A549 (cell line): ENCODE measurements at regions of chr16 and their contacts with region 1.

Region 1: DNA sequence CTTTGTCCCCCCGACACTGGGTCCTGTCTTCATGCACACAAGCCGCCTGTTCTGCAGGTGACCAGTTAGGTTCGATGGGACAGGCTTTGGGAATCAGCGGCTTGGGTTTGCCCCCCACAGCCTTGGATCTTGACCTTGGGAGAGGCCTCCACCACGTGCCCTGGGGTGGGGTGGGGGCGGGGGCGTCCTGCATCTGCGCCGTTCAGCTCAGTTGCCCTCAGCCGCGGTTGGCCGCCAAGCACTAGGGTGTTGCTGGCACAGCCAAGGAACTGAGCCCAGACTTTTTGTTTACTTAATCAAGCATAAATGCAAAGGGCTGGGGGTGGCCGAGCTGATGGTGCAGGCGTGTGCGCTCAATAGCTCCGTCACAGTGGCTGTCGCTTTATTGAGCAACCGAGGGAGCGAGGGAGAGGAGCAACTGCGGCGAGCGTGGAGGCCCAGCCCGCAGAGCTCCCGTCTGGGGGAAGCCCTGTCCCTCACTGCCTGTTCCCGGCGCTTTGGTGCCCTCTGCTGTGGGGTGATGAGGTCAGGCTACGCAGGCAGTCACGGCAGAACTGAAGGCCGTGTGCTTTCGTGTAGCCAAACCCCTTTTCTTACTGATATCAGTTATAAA is 33.9 kb downstream of the JPH3 start:
- DNase-seq: peak; percentile 87 to 98
- ATAC-seq: peak; percentile 90 to 95
- H3K4me3 ChIP-seq: peak overlapping the region; percentile 53
- H3K27ac ChIP-seq: peak overlapping the region; percentile 75 to 85
- H3K4me1 ChIP-seq: 0 out of 3 replicates have a peak, but pooled peaks cover 7% of the 10 kb centered on the region
- CTCF ChIP-seq: peak; percentile 84
- EP300 ChIP-seq: no peak
- POLR2A ChIP-seq: peak; percentile 32
- RAD21 ChIP-seq: peak; percentile 91 to 95

Region 2: DNA sequence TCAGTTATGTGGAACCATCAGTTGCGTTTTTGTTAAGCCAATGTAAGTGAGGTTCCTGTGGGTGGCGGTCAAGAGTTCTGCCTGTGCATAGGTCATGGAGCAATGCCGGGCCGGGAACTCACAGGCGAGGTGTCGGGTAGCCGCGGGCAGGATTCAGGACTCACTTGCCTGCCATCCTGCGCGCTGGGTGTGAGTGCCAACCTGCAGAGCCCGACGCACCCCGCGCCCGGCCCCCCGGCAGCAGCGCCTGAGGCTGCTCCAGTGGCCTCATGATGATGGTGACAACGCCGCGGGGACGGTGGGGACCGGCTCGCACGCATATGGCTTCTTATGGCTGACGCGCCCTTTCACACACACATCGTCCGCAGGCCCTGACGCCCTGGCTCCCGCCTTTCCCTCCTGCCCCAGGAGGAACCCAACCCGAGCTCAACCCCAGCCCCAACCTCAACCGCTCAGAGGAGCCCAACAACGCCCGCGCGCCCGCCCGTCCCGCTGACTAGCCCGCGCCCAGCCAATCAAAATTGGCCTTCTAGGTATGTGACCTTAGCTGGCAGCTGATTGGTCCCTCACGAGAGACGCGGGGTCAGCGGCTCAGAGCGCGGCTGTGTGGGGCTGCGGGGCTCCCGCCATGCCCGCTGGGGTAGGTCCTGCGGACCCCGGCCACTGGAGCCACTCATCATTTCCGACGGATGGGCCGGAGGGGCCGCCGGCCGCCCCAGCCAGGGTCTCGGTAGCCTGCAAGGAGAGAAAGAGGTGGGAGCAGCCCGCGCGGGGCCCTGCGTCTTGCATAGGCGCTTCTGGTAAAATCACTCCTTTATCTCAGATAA is 319.0 kb before region 1 on chr16 and contains the start of gene C16orf95:
- CTCF ChIA-PET with region 1: interaction called, 16 read pairs
- POLR2A ChIA-PET with region 1: interaction called, 3 read pairs
- DNase-seq: peak; percentile 95 to 99
- ATAC-seq: peak; percentile 96 to 98
- H3K4me3 ChIP-seq: peak within 1 kb of the TSS; percentile 69
- H3K27ac ChIP-seq: peak within 1 kb of the TSS; percentile 89 to 94
- H3K4me1 ChIP-seq: peaks cover 6% of the 10 kb centered on the region; the same call in 2 of the 3 replicates
- CTCF ChIP-seq: peak; percentile 52
- EP300 ChIP-seq: no peak
- POLR2A ChIP-seq: peak; percentile 75
- RAD21 ChIP-seq: peak; percentile 34 to 50
- polyA plus RNA-seq, gene C16orf95: 3.4 and 3.5 TPM in 2 replicates

Region 3: GRCh38 chr16:87416826-87417527 is 219.2 kb before region 1 on chr16:
- CTCF ChIA-PET with region 1: interaction called, 153 read pairs
- POLR2A ChIA-PET with region 1: interaction called, 3 read pairs
- DNase-seq: peak; percentile 15 to 54
- ATAC-seq: peak in 1 of 2 experiments; percentile 62; a peak in 3 of 6 replicates
- H3K4me3 ChIP-seq: no peak overlapping the region
- H3K27ac ChIP-seq: no peak overlapping the region
- H3K4me1 ChIP-seq: no peaks in the 10 kb centered on the region
- CTCF ChIP-seq: peak; percentile 74
- EP300 ChIP-seq: no peak
- POLR2A ChIP-seq: no peak
- RAD21 ChIP-seq: peak; percentile 69 to 72

Region 4: DNA sequence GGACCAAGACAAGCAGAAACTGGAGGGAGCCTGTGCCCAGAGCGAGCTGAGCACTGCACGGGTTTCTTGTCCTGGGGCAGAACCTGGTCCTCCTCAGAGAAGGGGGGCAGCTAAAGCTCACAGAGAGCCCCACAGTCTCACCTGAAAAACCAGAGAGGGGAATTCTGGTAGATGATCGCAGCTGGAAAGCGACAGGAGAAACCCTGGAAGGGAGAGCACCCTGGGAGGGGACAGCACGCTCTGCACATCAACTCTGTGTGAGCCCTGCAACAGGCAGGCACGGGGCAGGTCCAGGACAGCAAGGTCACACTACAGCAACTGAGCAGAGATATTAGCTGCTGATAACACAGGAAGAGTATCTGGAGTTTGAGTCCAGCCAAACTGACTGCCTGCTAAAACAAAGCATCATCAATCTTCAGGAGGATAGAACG is 161.6 kb before region 1 on chr16:
- CTCF ChIA-PET with region 1: interaction called, 16 read pairs
- POLR2A ChIA-PET with region 1: no interaction called
- DNase-seq: no peak
- ATAC-seq: no peak
- H3K4me3 ChIP-seq: no peak overlapping the region
- H3K27ac ChIP-seq: no peak overlapping the region
- H3K4me1 ChIP-seq: peaks cover 6% of the 10 kb centered on the region; the same call in 1 of the 3 replicates
- CTCF ChIP-seq: no peak
- EP300 ChIP-seq: no peak
- POLR2A ChIP-seq: no peak
- RAD21 ChIP-seq: no peak

Region 5: DNA sequence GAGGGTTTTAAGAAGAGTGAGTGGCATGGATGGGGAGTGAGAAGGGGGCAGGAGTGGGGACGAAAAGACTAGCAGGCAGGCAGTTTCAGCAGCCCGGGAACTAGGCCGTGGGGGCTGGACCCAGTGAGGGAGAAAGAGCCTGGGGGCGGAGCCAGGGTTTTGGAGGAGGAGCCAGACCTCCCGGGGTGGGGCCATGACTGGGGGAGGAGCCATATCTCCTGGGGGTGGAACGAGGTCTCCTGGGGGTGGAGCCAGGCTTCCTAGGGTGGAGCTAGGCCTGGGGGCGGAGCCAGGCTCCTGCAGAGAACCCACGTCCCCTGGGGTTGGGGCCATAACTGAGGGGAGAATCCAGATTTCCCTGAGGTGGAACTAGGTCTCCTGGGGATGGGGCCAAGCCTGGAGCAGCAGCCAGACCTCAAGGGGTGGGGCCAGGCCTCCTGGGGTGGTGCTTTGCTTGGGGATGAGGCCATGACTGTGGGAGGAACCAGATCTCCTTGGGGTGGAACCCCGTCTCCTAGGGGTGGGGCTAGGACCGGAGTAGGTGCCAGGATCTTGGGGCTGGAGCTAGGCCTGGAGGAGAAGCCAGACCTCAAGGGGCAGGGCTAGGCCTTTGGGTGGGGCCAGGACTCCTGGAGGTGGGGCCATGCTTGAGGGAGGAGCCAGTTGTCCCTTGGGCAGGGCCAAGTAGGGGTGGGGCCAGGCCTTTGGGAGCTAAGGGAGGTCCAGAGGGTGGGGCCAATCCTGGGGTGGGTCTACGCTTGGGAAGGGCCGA is 75.6 kb before region 1 on chr16:
- CTCF ChIA-PET with region 1: interaction called, 24 read pairs
- POLR2A ChIA-PET with region 1: no interaction called
- DNase-seq: peak; percentile 65 to 83
- ATAC-seq: peak; percentile 70 to 93
- H3K4me3 ChIP-seq: no peak overlapping the region
- H3K27ac ChIP-seq: peak overlapping the region in 1 of 2 experiments; percentile 7; a peak in 1 of 6 replicates
- H3K4me1 ChIP-seq: no peaks in the 10 kb centered on the region
- CTCF ChIP-seq: no peak
- EP300 ChIP-seq: no peak
- POLR2A ChIP-seq: no peak
- RAD21 ChIP-seq: no peak

Region 6: GRCh38 chr16:87608400-87608985 is 27.7 kb before region 1 on chr16:
- CTCF ChIA-PET with region 1: interaction called, 83 read pairs
- POLR2A ChIA-PET with region 1: no interaction called
- DNase-seq: peak in 1 of 2 experiments; percentile 53
- ATAC-seq: peak; percentile 67 to 70
- H3K4me3 ChIP-seq: no peak overlapping the region
- H3K27ac ChIP-seq: no peak overlapping the region
- H3K4me1 ChIP-seq: peaks cover 4% of the 10 kb centered on the region; the same call in 1 of the 3 replicates
- CTCF ChIP-seq: no peak
- EP300 ChIP-seq: no peak
- POLR2A ChIP-seq: no peak
- RAD21 ChIP-seq: no peak

Region 7: GRCh38 chr16:87809150-87809902 is 173.1 kb after region 1 on chr16:
- CTCF ChIA-PET with region 1: no interaction called
- POLR2A ChIA-PET with region 1: no interaction called
- DNase-seq: no peak
- ATAC-seq: no peak
- H3K4me3 ChIP-seq: no peak overlapping the region
- H3K27ac ChIP-seq: peak overlapping the region; percentile 92 to 97
- H3K4me1 ChIP-seq: peaks cover 45% of the 10 kb centered on the region
- CTCF ChIP-seq: no peak
- EP300 ChIP-seq: no peak
- POLR2A ChIP-seq: no peak
- RAD21 ChIP-seq: no peak